GM12878 (cell line): ENCODE measurements at regions of chr11 and their contacts with region 1.

Region 1: GRCh38 chr11:117985953-117986887 is at the start of gene IL10RA:
- DNase-seq: no peak
- ATAC-seq: peak; percentile 87
- H3K4me3 ChIP-seq: peak within 1 kb of the TSS; percentile 79
- H3K27ac ChIP-seq: peak within 1 kb of the TSS; percentile 84
- H3K4me1 ChIP-seq: peaks cover 18% of the 10 kb centered on the region
- H3K27me3 ChIP-seq: no peaks in the 10 kb centered on the region
- CTCF ChIP-seq: peak in 2 of 3 experiments; percentile 10 to 15; a peak in 1 of 6 replicates
- EP300 ChIP-seq: 0 out of 4 replicates have a peak, but pooled peaks of 1 of the 2 experiments have one; percentile 26
- POLR2A ChIP-seq: peak; percentile 99
- RAD21 ChIP-seq: no peak
- polyA plus RNA-seq, gene IL10RA: 0.77 to 1.4 TPM

Region 2: GRCh38 chr11:117959438-117960149 is 26.6 kb before region 1 on chr11:
- CTCF ChIA-PET with region 1: interaction called, 3 read pairs
- POLR2A ChIA-PET with region 1: interaction called, 9 read pairs
- RAD21 ChIA-PET with region 1: interaction called, 7 read pairs
- SMC1A ChIA-PET with region 1: interaction called, 167 read pairs
- in situ Hi-C with region 1: no loop called
- intact Hi-C with region 1: no loop called
- DNase-seq: no peak
- ATAC-seq: peak; percentile 65
- H3K4me3 ChIP-seq: no peak overlapping the region
- H3K27ac ChIP-seq: peak overlapping the region; percentile 31
- H3K4me1 ChIP-seq: peaks cover 13% of the 10 kb centered on the region
- H3K27me3 ChIP-seq: no peaks in the 10 kb centered on the region
- CTCF ChIP-seq: no peak
- EP300 ChIP-seq: no peak
- POLR2A ChIP-seq: no peak
- RAD21 ChIP-seq: no peak

Region 3: DNA sequence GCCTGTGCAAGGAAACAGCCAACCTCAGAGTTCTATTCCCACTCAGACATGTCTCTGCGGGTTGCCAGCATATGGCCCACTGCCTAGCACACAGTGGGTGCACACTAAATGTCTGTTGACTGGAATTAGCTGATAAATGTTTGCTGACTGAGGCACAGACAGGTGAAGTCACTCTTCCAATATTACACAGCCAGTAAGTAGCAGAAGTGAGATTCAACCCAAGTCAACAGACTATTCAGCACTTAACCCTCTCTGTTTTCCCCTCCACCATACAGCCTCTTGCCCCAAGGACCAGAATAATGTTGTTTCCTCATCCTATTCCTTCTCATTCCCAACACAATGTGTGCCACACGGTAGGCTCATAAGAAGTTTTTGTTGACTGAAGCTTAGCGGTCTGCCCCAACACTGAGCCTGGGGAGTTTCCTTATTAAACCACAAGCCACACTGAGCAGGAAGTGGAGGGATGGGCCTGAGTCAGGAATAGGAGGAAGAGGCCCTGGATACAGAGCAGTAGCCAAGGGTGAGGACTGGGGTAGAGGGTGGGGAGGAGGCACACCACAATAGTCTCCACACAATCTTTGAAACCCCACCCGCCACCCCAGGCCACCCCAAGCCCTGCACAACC is 15.7 kb before region 1 on chr11:
- CTCF ChIA-PET with region 1: interaction called, 4 read pairs
- POLR2A ChIA-PET with region 1: interaction called, 35 read pairs
- RAD21 ChIA-PET with region 1: interaction called, 26 read pairs
- SMC1A ChIA-PET with region 1: interaction called, 14 read pairs
- in situ Hi-C with region 1: no loop called
- intact Hi-C with region 1: no loop called
- DNase-seq: no peak
- ATAC-seq: peak; percentile 77
- H3K4me3 ChIP-seq: no peak overlapping the region
- H3K27ac ChIP-seq: no peak overlapping the region
- H3K4me1 ChIP-seq: peaks cover 13% of the 10 kb centered on the region
- H3K27me3 ChIP-seq: no peaks in the 10 kb centered on the region
- CTCF ChIP-seq: no peak
- EP300 ChIP-seq: no peak
- POLR2A ChIP-seq: no peak
- RAD21 ChIP-seq: no peak

Region 4: GRCh38 chr11:118002541-118003423 is 16.6 kb after region 1 on chr11:
- CTCF ChIA-PET with region 1: interaction called, 49 read pairs
- POLR2A ChIA-PET with region 1: interaction called, 110 read pairs
- RAD21 ChIA-PET with region 1: interaction called, 37 read pairs
- SMC1A ChIA-PET with region 1: interaction called, 280 read pairs
- in situ Hi-C with region 1: no loop called
- intact Hi-C with region 1: no loop called
- DNase-seq: no peak
- ATAC-seq: peak; percentile 6; the same call in 2 of the 3 replicates
- H3K4me3 ChIP-seq: no peak overlapping the region
- H3K27ac ChIP-seq: peak overlapping the region; percentile 38
- H3K4me1 ChIP-seq: peaks cover 70% of the 10 kb centered on the region
- H3K27me3 ChIP-seq: no peaks in the 10 kb centered on the region
- CTCF ChIP-seq: no peak
- EP300 ChIP-seq: no peak
- POLR2A ChIP-seq: no peak
- RAD21 ChIP-seq: no peak

Region 5: DNA sequence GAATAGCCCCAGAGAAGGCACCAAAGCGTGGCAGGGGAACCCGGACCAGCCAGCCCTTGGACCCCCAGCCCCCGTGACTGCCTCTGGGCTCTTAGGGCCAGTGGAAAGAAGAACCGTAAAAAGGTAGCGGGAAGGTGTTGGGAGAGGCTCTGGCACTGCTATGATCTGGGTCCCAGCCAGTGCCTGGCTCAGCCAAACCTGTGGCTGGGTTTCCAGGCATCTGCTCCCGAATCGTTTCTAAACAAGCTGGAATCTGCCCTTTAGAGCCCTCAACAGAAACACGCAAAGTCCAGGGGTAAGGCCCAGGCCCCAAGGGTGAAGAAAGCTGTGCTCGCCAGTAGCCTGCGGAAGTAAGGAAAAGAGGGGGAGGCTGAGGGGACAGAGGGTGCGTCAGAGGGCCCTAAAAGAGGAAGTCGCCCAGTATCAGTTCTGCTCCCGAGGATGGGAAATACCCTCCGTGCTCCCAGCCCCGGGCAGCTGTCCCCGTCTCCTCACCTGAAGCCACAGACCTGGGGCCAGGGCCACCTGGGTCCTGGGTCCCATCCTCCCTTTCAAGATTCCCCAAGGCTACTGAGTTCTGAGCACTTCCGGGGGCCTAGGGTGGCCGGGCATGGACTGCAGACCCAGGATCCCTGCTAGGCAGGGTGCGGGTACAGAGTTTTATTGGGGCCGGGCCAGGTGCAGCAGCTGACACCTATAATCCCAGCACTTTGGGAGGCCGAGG is 24.7 kb after region 1 on chr11:
- CTCF ChIA-PET with region 1: interaction called, 49 read pairs
- POLR2A ChIA-PET with region 1: interaction called, 20 read pairs
- RAD21 ChIA-PET with region 1: interaction called, 34 read pairs
- SMC1A ChIA-PET with region 1: interaction called, 280 read pairs
- in situ Hi-C with region 1: no loop called
- intact Hi-C with region 1: loop called (anchors 1 kb)
- DNase-seq: peak; percentile 86
- ATAC-seq: peak; percentile 85
- H3K4me3 ChIP-seq: no peak overlapping the region
- H3K27ac ChIP-seq: peak overlapping the region; percentile 97
- H3K4me1 ChIP-seq: peaks cover 80% of the 10 kb centered on the region
- H3K27me3 ChIP-seq: no peaks in the 10 kb centered on the region
- CTCF ChIP-seq: no peak
- EP300 ChIP-seq: peak; percentile 100
- POLR2A ChIP-seq: no peak
- RAD21 ChIP-seq: 0 out of 2 replicates have a peak, but pooled peaks have one; percentile 15

Region 6: DNA sequence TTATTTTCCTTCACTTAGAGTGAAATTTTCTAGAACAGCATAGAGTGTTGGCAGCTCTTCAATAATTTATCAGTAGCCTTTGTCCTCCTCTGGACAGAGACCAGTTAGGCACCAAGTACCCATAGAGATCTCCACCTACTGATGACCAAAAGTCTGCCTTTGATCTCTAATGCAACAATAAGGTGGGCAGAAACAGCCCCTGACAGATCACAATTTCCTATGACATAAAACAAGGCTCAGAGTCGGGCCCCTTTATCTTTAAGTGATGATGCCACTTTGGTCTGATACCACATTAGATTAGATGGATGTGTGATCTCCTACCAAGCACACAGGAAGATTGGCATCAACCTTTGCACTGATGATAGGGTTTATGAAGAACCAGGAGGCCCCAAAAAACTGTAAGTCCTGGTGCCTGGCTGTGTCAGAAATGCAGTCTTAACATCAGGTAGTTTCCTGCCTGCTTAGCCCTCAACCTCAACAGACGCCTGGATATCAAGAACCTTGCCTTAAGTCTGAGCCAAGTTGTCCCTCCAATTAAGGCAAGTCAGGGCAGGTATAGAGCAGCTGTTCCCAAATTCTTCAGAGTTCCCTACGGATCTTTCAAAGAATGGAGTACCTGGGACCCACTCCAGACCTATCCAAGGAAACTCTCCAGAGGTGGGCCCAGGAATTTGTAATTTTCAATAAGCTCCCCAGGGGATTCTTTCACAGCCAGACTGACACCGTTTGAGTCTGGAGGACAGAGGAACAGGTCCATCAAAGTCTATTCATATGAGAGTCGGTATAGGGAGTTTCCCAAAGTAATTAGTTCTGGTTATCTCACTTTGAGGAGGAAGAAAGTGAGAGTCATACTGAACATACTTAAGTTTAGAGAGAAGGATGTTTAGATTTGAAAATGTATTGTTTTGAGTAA is 60.1 kb after region 1 on chr11:
- CTCF ChIA-PET with region 1: interaction called, 45 read pairs
- POLR2A ChIA-PET with region 1: interaction called, 9 read pairs
- RAD21 ChIA-PET with region 1: interaction called, 60 read pairs
- SMC1A ChIA-PET with region 1: interaction called, 67 read pairs
- in situ Hi-C with region 1: no loop called
- intact Hi-C with region 1: loop called (anchors 2 kb)
- DNase-seq: peak; percentile 44
- ATAC-seq: peak; percentile 88
- H3K4me3 ChIP-seq: no peak overlapping the region
- H3K27ac ChIP-seq: no peak overlapping the region
- H3K4me1 ChIP-seq: peaks cover 20% of the 10 kb centered on the region
- H3K27me3 ChIP-seq: no peaks in the 10 kb centered on the region
- CTCF ChIP-seq: no peak
- EP300 ChIP-seq: no peak
- POLR2A ChIP-seq: no peak
- RAD21 ChIP-seq: no peak

Region 7: GRCh38 chr11:118396097-118396501 is 409.9 kb after region 1 on chr11:
- CTCF ChIA-PET with region 1: no interaction called
- POLR2A ChIA-PET with region 1: no interaction called
- RAD21 ChIA-PET with region 1: no interaction called
- SMC1A ChIA-PET with region 1: no interaction called
- in situ Hi-C with region 1: no loop called
- intact Hi-C with region 1: no loop called
- DNase-seq: no peak
- ATAC-seq: no peak
- H3K4me3 ChIP-seq: no peak overlapping the region
- H3K27ac ChIP-seq: no peak overlapping the region
- H3K4me1 ChIP-seq: peaks cover 10% of the 10 kb centered on the region; the same call in 1 of the 2 replicates
- H3K27me3 ChIP-seq: no peaks in the 10 kb centered on the region
- CTCF ChIP-seq: no peak
- EP300 ChIP-seq: no peak
- POLR2A ChIP-seq: no peak
- RAD21 ChIP-seq: no peak